ENCODE measurements at regions of chr17 and their contacts with region 1.

Region 1: DNA sequence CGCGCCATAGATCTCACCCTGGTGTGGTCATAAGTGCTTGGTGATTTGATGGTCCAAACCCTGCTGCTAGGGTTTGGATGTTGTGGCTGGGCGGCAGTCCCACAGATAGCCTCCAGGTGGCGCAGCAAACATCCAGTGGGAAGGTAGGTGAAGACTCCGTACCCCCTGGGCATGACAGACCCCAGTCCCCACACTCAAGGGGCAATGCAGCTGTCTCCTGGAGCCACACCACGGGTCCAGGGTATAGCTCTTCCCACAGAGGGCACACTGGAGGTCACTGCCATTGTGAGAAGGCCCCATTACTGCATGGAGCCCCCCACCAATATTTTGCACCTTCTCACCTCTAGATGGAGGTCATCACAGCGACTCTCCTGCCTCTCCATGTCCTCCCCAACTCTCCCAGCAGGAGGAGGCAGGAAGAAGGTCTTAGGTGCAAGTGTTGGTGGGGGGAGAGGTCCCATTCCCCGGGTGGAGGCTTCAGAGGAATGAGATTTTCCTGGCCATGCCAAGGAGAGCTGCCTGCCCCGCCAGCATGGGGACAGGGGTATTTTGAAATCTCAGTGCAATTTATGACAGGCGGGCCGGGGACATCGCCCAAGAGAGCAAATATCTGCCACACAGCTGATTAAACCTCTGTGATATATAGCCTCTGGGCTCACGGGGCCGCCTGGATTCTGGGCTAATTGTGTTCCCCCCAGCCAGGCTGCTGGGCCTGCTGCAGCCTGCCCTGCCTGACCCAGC is 17.1 kb upstream of the C17orf113 start:
- DNase-seq: peak; percentile 92
- ATAC-seq: peak; percentile 76
- H3K4me3 Mint-ChIP-seq: no peak overlapping the region
- H3K27ac Mint-ChIP-seq: no peak overlapping the region
- H3K4me1 Mint-ChIP-seq: peaks cover 20% of the 10 kb centered on the region
- H3K27me3 Mint-ChIP-seq: peaks cover 3% of the 10 kb centered on the region
- CTCF ChIP-seq: peak; percentile 97

Region 2: GRCh38 chr17:42002792-42003301 is 64.7 kb before region 1 on chr17:
- CTCF ChIA-PET with region 1: no interaction called
- POLR2A ChIA-PET with region 1: no interaction called
- DNase-seq: no peak
- ATAC-seq: no peak
- H3K4me3 Mint-ChIP-seq: no peak overlapping the region
- H3K27ac Mint-ChIP-seq: peak overlapping the region; percentile 51; the same call in 1 of the 2 replicates
- H3K4me1 Mint-ChIP-seq: no peaks in the 10 kb centered on the region
- H3K27me3 Mint-ChIP-seq: no peaks in the 10 kb centered on the region; the same call in 1 of the 2 replicates
- CTCF ChIP-seq: no peak

Region 3: GRCh38 chr17:42050393-42051012 is 17.0 kb before region 1 on chr17 and contains the start of gene C17orf113:
- CTCF ChIA-PET with region 1: interaction called, 11 read pairs
- POLR2A ChIA-PET with region 1: interaction called, 3 read pairs
- DNase-seq: peak; percentile 75
- ATAC-seq: peak; percentile 72
- H3K4me3 Mint-ChIP-seq: peak within 1 kb of the TSS; percentile 76
- H3K27ac Mint-ChIP-seq: no peak within 1 kb of the TSS
- H3K4me1 Mint-ChIP-seq: peaks cover 46% of the 10 kb centered on the region
- H3K27me3 Mint-ChIP-seq: peaks cover 9% of the 10 kb centered on the region
- CTCF ChIP-seq: no peak
- total RNA-seq, gene C17orf113: 1.9 to 2.8 TPM (median 2.5 TPM) in 3 replicates

Region 4: GRCh38 chr17:42087736-42088705 is 20.5 kb after region 1 on chr17:
- CTCF ChIA-PET with region 1: interaction called, 11 read pairs
- POLR2A ChIA-PET with region 1: no interaction called
- DNase-seq: no peak
- ATAC-seq: peak; percentile 30
- H3K4me3 Mint-ChIP-seq: no peak overlapping the region
- H3K27ac Mint-ChIP-seq: no peak overlapping the region
- H3K4me1 Mint-ChIP-seq: peaks cover 15% of the 10 kb centered on the region
- H3K27me3 Mint-ChIP-seq: no peaks in the 10 kb centered on the region
- CTCF ChIP-seq: no peak

Region 5: GRCh38 chr17:42120770-42121769 is 53.5 kb after region 1 on chr17 and contains the start of gene KAT2A:
- CTCF ChIA-PET with region 1: interaction called, 17 read pairs
- POLR2A ChIA-PET with region 1: interaction called, 3 read pairs
- DNase-seq: peak; percentile 85
- ATAC-seq: peak; percentile 73
- H3K4me3 Mint-ChIP-seq: peak within 1 kb of the TSS; percentile 69
- H3K27ac Mint-ChIP-seq: 0 out of 2 replicates have a peak within 1 kb of the TSS, but pooled peaks have one; percentile 19
- H3K4me1 Mint-ChIP-seq: peaks cover 31% of the 10 kb centered on the region
- H3K27me3 Mint-ChIP-seq: no peaks in the 10 kb centered on the region
- CTCF ChIP-seq: no peak
- total RNA-seq, gene KAT2A: 44.8 to 54.0 TPM (median 52.7 TPM) in 3 replicates

Measured in WTC11 (cell line).